ENCODE measurements at regions of chr2 and their contacts with region 1.

Region 1: GRCh38 chr2:65396348-65397026 is 35.9 kb downstream of the SPRED2 start:
- DNase-seq: peak; percentile 84
- ATAC-seq: peak; percentile 84
- H3K4me3 ChIP-seq: peak overlapping the region; percentile 58
- H3K27ac ChIP-seq: peak overlapping the region; percentile 94
- H3K4me1 ChIP-seq: peaks cover 39% of the 10 kb centered on the region
- H3K27me3 ChIP-seq: no peaks in the 10 kb centered on the region
- CTCF ChIP-seq: no peak

Region 2: GRCh38 chr2:65411056-65411795 is 14.7 kb after region 1 on chr2:
- CTCF ChIA-PET with region 1: no interaction called
- POLR2A ChIA-PET with region 1: no interaction called
- intact Hi-C with region 1: loop called (anchors 2 kb)
- DNase-seq: peak; percentile 77
- ATAC-seq: peak; percentile 83
- H3K4me3 ChIP-seq: peak overlapping the region; percentile 47; the same call in 1 of the 2 replicates
- H3K27ac ChIP-seq: peak overlapping the region; percentile 76
- H3K4me1 ChIP-seq: peaks cover 58% of the 10 kb centered on the region
- H3K27me3 ChIP-seq: no peaks in the 10 kb centered on the region
- CTCF ChIP-seq: no peak

Region 3: GRCh38 chr2:65671670-65672242 is 275.3 kb after region 1 on chr2:
- CTCF ChIA-PET with region 1: no interaction called
- POLR2A ChIA-PET with region 1: no interaction called
- intact Hi-C with region 1: no loop called
- DNase-seq: no peak
- ATAC-seq: no peak
- H3K4me3 ChIP-seq: no peak overlapping the region
- H3K27ac ChIP-seq: no peak overlapping the region
- H3K4me1 ChIP-seq: no peaks in the 10 kb centered on the region
- H3K27me3 ChIP-seq: no peaks in the 10 kb centered on the region
- CTCF ChIP-seq: no peak

Measured in PC-3 (cell line).